ENCODE measurements at regions of chr17 and their contacts with region 1.

Region 1: DNA sequence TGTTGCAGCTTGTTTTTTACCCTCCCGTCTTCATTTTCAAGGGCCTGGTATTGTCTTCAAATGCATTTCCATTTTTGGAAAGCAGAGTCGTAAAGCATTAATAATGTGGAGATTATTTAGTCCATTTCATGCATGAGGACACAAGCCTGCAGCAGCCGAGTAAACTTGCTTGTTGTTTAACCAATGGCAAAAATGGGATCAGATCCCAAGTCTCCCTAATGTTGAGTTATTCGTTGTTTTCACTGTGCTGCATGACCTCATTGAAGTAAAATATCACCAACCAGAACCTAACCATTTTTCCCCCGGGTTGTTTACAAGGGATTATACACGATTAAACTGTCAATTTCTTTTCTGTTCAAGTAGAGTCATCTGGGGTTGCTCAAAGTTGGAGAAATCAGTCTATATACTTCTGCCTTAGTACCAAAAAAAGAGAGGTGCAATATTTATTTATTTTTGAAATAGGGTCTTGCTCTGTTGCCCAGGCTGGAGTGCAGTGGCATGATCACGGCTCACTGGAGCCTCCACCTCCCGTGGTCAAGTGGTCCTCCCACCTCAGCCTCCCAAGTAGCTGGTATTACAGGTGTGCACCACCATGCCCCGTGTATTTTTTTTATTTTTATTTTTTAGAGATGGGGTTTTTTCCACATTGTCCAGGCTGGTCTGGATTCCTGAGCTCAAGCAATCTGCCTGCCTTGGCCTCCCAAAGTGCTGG is 12.4 kb downstream of the AMZ2 start:
- DNase-seq: no peak
- ATAC-seq: no peak
- H3K4me3 ChIP-seq: no peak overlapping the region
- H3K27ac ChIP-seq: no peak overlapping the region
- H3K4me1 ChIP-seq: peaks cover 0 to 2% of the 10 kb centered on the region in 2 donors
- H3K27me3 ChIP-seq: no peaks in the 10 kb centered on the region

Region 2: GRCh38 chr17:68074279-68074678 is 185.9 kb before region 1 on chr17:
- intact Hi-C with region 1: no loop called
- DNase-seq: no peak
- ATAC-seq: peak; percentile 51
- H3K4me3 ChIP-seq: no peak overlapping the region
- H3K27ac ChIP-seq: no peak overlapping the region
- H3K4me1 ChIP-seq: no peaks in the 10 kb centered on the region
- H3K27me3 ChIP-seq: no peaks in the 10 kb centered on the region

Region 3: GRCh38 chr17:68184816-68185436 is 75.3 kb before region 1 on chr17:
- intact Hi-C with region 1: no loop called
- DNase-seq: no peak
- ATAC-seq: no peak
- H3K4me3 ChIP-seq: no peak overlapping the region
- H3K27ac ChIP-seq: no peak overlapping the region
- H3K4me1 ChIP-seq: no peaks in the 10 kb centered on the region
- H3K27me3 ChIP-seq: no peaks in the 10 kb centered on the region

Region 4: DNA sequence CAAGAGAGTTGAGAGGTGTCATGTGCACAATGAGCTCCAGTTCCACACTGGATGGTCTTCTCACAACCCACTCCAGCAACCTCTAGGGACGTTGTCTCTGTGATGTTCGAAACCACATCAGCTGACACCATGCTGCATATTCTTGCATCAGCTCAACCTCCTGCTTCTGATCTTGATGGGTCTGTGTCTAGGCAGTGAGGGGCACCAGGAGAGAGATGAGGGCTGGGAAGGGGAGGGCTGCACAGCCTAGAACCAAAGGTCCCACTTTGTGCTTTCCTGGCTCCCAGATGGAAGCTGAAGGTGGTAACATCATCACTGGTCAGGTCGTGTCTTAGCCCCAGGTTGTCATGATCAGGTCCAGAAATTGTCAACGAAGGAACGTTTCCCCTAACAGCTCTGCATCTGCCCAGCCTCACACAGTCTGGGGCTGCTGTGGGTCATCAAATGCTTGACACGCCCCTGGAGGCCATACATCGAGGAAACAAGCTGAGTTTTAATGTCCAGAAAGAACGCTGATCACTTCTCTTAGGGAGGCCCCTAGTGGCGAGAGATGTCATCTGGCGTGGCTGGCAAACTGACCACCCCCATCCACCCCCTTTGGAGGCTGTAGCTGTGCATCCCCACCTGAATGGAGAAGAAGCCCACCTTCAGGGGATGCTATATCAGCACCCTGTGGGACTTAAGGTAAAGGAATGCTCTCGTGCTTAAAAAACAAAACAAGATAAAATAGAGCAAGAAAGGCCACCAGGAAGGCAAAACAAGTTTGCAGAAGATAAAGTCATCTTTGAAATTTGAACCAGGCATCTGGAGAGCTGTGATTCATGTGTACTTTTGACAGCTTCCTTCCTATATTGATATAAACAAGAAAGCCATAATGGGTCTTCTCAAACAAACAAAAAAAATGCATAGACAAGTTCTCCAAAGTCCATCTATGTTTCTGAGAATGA is 138.8 kb after region 1 on chr17:
- intact Hi-C with region 1: loop called in 1 of 2 experiments (anchors 5 kb)
- DNase-seq: peak in 1 of 2 donors; percentile 63
- ATAC-seq: peak; percentile 70
- H3K4me3 ChIP-seq: no peak overlapping the region
- H3K27ac ChIP-seq: no peak overlapping the region
- H3K4me1 ChIP-seq: peaks cover 0 to 3% of the 10 kb centered on the region in 2 donors
- H3K27me3 ChIP-seq: no peaks in the 10 kb centered on the region

Region 5: GRCh38 chr17:68435876-68436842 is 176.0 kb after region 1 on chr17:
- intact Hi-C with region 1: loop called (anchors 5 kb)
- DNase-seq: peak; percentile 82 to 85
- ATAC-seq: peak; percentile 88
- H3K4me3 ChIP-seq: no peak overlapping the region
- H3K27ac ChIP-seq: no peak overlapping the region
- H3K4me1 ChIP-seq: no peaks in the 10 kb centered on the region
- H3K27me3 ChIP-seq: no peaks in the 10 kb centered on the region

Region 6: GRCh38 chr17:68457539-68458259 is 197.5 kb after region 1 on chr17:
- intact Hi-C with region 1: loop called (anchors 5 kb)
- DNase-seq: peak; percentile 99
- ATAC-seq: peak; percentile 98
- H3K4me3 ChIP-seq: peak overlapping the region; percentile 41 to 44
- H3K27ac ChIP-seq: peak overlapping the region in 1 of 2 donors; percentile 62
- H3K4me1 ChIP-seq: peaks cover 0 to 2% of the 10 kb centered on the region in 2 donors
- H3K27me3 ChIP-seq: no peaks in the 10 kb centered on the region

Measured in aorta (tissue), 5 donors.